Gastrocnemius medialis (tissue), 4 donors: ENCODE measurements at regions of chr12 and their contacts with region 1.

Region 1: GRCh38 chr12:54279866-54280467 is at the start of gene CBX5:
- DNase-seq: peak; percentile 99
- ATAC-seq: peak; percentile 72 to 77
- H3K4me3 ChIP-seq: peak within 1 kb of the TSS; percentile 74 to 95 (median 81)
- H3K27ac ChIP-seq: peak within 1 kb of the TSS; percentile 93 to 98 (median 96)
- H3K4me1 ChIP-seq: peaks cover 51 to 53% of the 10 kb centered on the region in 2 donors
- H3K27me3 ChIP-seq: no peaks in the 10 kb centered on the region
- CTCF ChIP-seq: no peak
- POLR2A ChIP-seq: peak; percentile 13 to 38
- total RNA-seq, gene CBX5: 7.9 to 8.9 (median 8.1) TPM

Region 2: GRCh38 chr12:53727310-53728041 is 552.5 kb before region 1 on chr12 and contains the start of gene CALCOCO1:
- in situ Hi-C with region 1: no loop called
- intact Hi-C with region 1: loop called (anchors 5 kb)
- DNase-seq: peak; percentile 98 to 99
- ATAC-seq: peak; percentile 96 to 97
- H3K4me3 ChIP-seq: peak within 1 kb of the TSS; percentile 69 to 93 (median 82)
- H3K27ac ChIP-seq: peak within 1 kb of the TSS; percentile 87 to 98 (median 93)
- H3K4me1 ChIP-seq: peaks cover 18% of the 10 kb centered on the region in 2 donors
- H3K27me3 ChIP-seq: no peaks in the 10 kb centered on the region
- CTCF ChIP-seq: no peak
- POLR2A ChIP-seq: peak; percentile 70 to 91
- total RNA-seq, gene CALCOCO1: 158 to 385 (median 239) TPM

Region 3: GRCh38 chr12:54017878-54018467 is 262.0 kb before region 1 on chr12:
- in situ Hi-C with region 1: no loop called
- intact Hi-C with region 1: loop called (anchors 5 kb)
- DNase-seq: peak; percentile 80 to 86
- ATAC-seq: peak; percentile 49 to 56
- H3K4me3 ChIP-seq: peak overlapping the region; percentile 62 to 70 (median 68)
- H3K27ac ChIP-seq: peak overlapping the region; percentile 94 to 100 (median 98)
- H3K4me1 ChIP-seq: peaks cover 59 to 71% of the 10 kb centered on the region in 2 donors
- H3K27me3 ChIP-seq: no peaks in the 10 kb centered on the region
- CTCF ChIP-seq: peak in 1 of 5 experiments; percentile 26
- POLR2A ChIP-seq: peak; percentile 84 to 89

Region 4: GRCh38 chr12:54324617-54325441 is 44.9 kb after region 1 on chr12 and contains the start of gene COPZ1:
- in situ Hi-C with region 1: no loop called
- intact Hi-C with region 1: loop called (anchors 2 kb)
- DNase-seq: peak; percentile 96 to 99
- ATAC-seq: peak; percentile 99 to 100
- H3K4me3 ChIP-seq: peak within 1 kb of the TSS; percentile 79 to 86 (median 84)
- H3K27ac ChIP-seq: peak within 1 kb of the TSS; percentile 82 to 91 (median 88)
- H3K4me1 ChIP-seq: peaks cover 16 to 29% of the 10 kb centered on the region in 2 donors
- H3K27me3 ChIP-seq: no peaks in the 10 kb centered on the region
- CTCF ChIP-seq: peak; percentile 56 to 77 (median 67)
- POLR2A ChIP-seq: peak; percentile 71 to 73
- total RNA-seq, gene COPZ1: 91.8 to 145 (median 107) TPM

Region 5: DNA sequence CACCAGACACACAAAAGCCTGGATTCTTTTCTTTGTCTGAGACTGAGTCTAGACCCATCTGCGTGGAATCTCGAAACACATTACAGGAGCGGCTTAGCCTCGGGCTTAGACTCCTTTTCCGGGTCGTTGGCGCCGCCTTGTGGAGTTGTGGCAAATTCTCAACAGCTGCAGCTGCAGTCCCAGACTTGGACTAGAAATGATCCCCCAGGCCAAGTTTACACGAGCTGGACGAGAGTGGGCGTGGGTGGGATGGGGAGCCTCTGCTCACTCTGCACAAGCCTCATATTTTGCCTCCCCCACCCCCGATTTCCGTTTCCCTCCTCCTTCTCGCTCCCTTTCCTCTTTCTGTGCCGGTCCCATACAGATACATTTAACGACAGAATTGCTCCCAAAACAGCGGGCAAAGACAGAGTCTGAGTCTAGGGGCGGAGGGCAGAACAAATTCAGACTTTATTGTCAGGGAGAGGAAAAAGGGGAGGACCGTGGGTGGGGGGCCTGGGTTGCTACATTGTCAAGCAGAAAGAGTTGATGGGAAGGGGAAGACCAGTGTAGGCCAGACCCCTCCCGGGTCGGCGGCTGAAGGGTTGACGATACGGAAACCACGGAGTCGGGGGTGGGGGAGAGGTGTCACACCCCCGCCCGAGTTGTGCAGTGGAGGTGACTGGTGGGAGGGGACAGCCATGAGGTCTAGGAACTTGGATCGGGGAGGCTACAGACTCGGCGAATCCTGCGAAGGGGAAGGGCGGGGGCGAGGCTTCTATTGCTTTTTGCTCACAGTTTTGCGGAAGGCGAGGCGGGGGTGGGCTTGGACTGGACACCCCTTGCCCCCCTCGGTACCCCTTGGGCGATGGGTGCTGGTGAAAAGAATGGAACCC is 89.0 kb after region 1 on chr12:
- in situ Hi-C with region 1: loop called in 1 of 4 experiments (anchors 5 kb)
- intact Hi-C with region 1: no loop called
- DNase-seq: peak; percentile 76 to 81
- ATAC-seq: peak; percentile 73 to 78
- H3K4me3 ChIP-seq: peak overlapping the region; percentile 46 to 68 (median 48)
- H3K27ac ChIP-seq: peak overlapping the region; percentile 34 to 60 (median 50)
- H3K4me1 ChIP-seq: peaks cover 29 to 30% of the 10 kb centered on the region in 2 donors
- H3K27me3 ChIP-seq: no peaks in the 10 kb centered on the region
- CTCF ChIP-seq: peak; percentile 74 to 87 (median 79)
- POLR2A ChIP-seq: no peak